Left cardiac atrium (tissue), 4 donors: ENCODE measurements at regions of chr1 and their contacts with region 1.

Region 1: GRCh38 chr1:40612345-40612831 is 53.1 kb downstream of the RIMS3 start:
- DNase-seq: peak; percentile 54
- ATAC-seq: peak; percentile 84 to 91

Region 2: DNA sequence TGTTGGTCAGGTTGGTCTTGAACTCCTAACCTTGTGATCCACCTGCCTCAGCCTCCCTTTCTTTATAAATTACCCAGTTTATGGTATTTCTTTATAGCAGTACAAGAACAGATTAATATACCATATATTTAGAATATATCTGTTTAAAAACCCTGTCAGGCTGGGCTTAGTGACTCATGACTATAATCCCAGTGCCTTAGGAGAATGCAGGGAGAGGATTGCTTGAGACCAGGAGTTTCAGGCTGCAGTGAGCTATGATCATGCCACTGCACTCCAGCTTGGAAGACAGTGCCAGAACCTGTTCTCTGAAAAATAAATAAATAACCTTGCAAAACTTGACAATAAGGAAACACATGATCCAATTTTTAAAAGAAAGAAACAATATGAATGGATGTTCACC is 37.1 kb before region 1 on chr1:
- intact Hi-C with region 1: no loop called
- DNase-seq: no peak
- ATAC-seq: no peak

Region 3: DNA sequence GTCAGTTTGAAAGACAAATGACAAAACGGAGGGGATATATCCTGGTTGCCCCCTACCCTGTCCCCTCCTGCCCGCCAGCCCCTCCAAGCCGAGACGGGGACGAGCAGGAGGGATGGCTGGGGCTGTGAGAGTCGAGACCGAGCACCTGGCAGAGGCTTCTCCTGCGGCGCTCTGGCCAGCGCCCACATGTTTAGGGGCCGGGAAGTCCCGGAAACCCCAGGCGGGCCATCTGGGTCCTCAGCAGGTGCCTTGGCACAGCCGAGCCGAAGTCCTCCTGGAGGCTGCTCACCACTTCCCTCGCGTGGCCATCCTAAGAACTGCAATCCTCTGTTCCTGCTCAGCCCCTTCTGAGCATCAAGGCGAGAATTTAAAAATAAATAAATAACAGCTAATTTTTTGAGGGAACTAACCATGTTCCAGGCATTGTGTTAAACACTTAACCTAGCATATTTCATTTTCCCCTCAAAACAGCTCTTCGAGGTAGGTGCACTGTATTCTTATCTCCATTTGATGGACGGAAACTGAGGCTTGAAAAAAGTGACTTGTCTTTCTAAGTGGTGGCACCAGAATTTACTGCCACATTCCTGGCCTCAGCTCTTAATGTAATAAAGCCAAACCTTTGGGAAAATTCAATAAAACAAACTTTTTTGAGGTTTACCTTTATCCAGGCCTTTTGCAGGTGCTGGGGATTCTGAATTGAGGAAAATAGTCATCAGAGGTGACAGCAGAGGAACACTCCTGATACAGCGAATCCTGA is 56.6 kb after region 1 on chr1:
- intact Hi-C with region 1: loop called in 1 of 2 experiments (anchors 5 kb)
- DNase-seq: peak; percentile 78
- ATAC-seq: peak; percentile 24 to 55

Region 4: GRCh38 chr1:40774266-40774998 is 162.0 kb after region 1 on chr1:
- intact Hi-C with region 1: loop called in 1 of 2 experiments (anchors 10 kb)
- DNase-seq: peak; percentile 61
- ATAC-seq: peak; percentile 56 to 61

Region 5: DNA sequence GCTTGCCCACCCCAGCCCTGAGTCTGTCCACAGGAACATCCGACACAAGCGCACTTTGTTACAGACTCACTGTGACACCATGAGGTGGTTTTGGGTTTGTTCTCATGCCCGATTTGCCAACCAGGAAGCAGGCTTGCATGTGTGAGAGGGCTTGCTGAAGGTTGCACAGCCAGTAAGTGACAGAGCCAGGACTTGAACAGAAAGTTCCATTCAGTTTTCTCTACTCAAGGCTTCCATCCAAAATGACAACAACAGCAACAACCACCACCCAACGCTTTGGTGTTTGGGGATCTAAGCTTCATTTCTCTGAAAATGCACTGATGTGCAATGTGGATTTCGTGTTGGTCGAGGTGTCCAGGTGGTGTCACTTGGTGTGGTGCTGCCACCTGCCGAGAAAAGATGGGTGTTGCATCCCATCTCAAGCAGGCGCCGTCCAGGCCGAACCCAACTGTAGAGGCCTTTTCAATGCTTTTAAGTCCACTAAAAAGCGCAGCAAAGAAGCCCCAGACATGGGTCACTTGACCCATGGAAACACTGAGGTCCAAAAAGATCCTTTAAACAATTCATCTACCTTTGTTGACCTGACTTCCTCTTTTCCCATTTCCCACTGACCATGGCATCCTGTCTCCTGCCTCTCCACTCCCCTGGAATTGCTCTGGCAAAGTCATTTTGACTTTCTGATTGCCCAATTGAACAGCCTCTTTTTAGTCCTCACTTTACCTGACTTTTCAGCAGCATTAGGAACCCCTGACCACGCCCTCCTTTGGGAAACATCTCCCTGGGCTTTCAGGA is 237.6 kb after region 1 on chr1:
- intact Hi-C with region 1: loop called (anchors 5 to 10 kb)
- DNase-seq: peak; percentile 74
- ATAC-seq: peak; percentile 75 to 88

Region 6: GRCh38 chr1:40951943-40952743 is 339.8 kb after region 1 on chr1:
- intact Hi-C with region 1: loop called (anchors 10 kb)
- DNase-seq: peak; percentile 73
- ATAC-seq: peak; percentile 85 to 87